Heart right ventricle (tissue), 16 donors: ENCODE measurements at regions of chr7 and their contacts with region 1.

Region 1: GRCh38 chr7:50281680-50282445 is 22.7 kb upstream of the IKZF1 start:
- DNase-seq: no peak
- ATAC-seq: peak in 7 of 8 donors; percentile 20 to 68 (median 42)
- H3K4me3 ChIP-seq: peak overlapping the region in 1 of 10 donors; percentile 9
- H3K27ac ChIP-seq: peak overlapping the region in 2 of 10 donors; percentile 9 to 72
- H3K4me1 ChIP-seq: peaks cover 0 to 50% (median 0%) of the 10 kb centered on the region in 9 donors
- H3K27me3 ChIP-seq: peaks cover 0 to 6% (median 0%) of the 10 kb centered on the region in 7 donors
- CTCF ChIP-seq: no peak

Region 2: GRCh38 chr7:49376817-49377216 is 905.0 kb before region 1 on chr7:
- intact Hi-C with region 1: no loop called
- DNase-seq: no peak
- ATAC-seq: no peak
- H3K4me3 ChIP-seq: no peak overlapping the region
- H3K27ac ChIP-seq: no peak overlapping the region
- H3K4me1 ChIP-seq: no peaks in the 10 kb centered on the region
- H3K27me3 ChIP-seq: no peaks in the 10 kb centered on the region
- CTCF ChIP-seq: no peak

Region 3: GRCh38 chr7:50349963-50350944 is 68.4 kb after region 1 on chr7:
- intact Hi-C with region 1: loop called in 1 of 10 experiments (anchors 10 kb)
- DNase-seq: no peak
- ATAC-seq: no peak
- H3K4me3 ChIP-seq: no peak overlapping the region
- H3K27ac ChIP-seq: peak overlapping the region in 1 of 10 donors; percentile 75
- H3K4me1 ChIP-seq: peaks cover 0 to 60% (median 0%) of the 10 kb centered on the region in 9 donors
- H3K27me3 ChIP-seq: peaks cover 0 to 44% (median 6%) of the 10 kb centered on the region in 7 donors
- CTCF ChIP-seq: no peak